A673 (cell line): ENCODE measurements at regions of chrX and their contacts with region 1.

Region 1: DNA sequence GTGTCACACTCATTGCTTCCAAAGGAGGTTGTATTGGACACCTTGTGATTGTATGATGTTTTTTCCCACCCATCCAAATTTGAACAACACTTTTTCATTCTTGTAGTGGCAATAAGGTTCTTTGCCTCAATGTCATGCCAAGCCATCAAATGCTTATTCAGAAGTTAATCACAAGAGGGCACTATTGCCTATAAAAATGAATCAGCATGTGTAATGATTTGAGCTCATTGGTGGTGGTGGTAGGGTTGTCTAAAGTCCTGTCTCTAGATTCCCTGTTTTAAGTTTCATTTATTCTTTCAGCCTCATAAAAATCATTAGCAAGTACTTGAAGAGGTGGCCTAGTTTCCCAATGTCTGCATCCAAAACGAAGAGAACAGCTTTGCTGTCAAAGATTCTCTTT is 37.0 kb downstream of the IRS4 start:
- DNase-seq: peak; percentile 56
- H3K4me3 ChIP-seq: no peak overlapping the region
- H3K27ac ChIP-seq: no peak overlapping the region
- H3K4me1 ChIP-seq: no peaks in the 10 kb centered on the region
- H3K27me3 ChIP-seq: peaks cover 3% of the 10 kb centered on the region
- CTCF ChIP-seq: peak; percentile 56

Region 2: GRCh38 chrX:108834036-108834435 is 134.7 kb after region 1 on chrX:
- CTCF ChIA-PET with region 1: no interaction called
- POLR2A ChIA-PET with region 1: no interaction called
- intact Hi-C with region 1: no loop called
- DNase-seq: no peak
- H3K4me3 ChIP-seq: no peak overlapping the region
- H3K27ac ChIP-seq: no peak overlapping the region
- H3K4me1 ChIP-seq: no peaks in the 10 kb centered on the region
- H3K27me3 ChIP-seq: no peaks in the 10 kb centered on the region
- CTCF ChIP-seq: no peak

Region 3: DNA sequence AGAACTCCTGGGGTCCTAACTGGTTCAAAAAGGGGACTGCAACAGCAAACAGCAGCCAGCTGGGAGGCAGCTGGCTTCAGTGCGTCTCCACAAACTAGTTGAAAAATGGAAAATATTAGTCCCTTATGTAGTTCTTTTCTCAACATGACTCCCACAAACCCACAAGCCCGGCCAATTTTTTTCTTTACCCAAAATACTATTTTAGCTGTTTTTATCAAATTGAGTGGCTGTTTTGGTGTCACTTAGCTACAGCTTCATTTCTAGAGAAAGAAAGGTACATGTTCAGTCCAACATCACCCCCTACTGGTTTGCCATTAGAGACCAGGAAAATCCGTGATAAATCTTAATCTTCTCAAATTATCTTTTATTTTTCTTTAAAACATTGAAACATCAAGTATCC is 685.3 kb after region 1 on chrX:
- CTCF ChIA-PET with region 1: interaction called, 7 read pairs
- POLR2A ChIA-PET with region 1: no interaction called
- intact Hi-C with region 1: loop called (anchors 2 kb)
- DNase-seq: peak; percentile 40
- H3K4me3 ChIP-seq: no peak overlapping the region
- H3K27ac ChIP-seq: no peak overlapping the region
- H3K4me1 ChIP-seq: no peaks in the 10 kb centered on the region
- H3K27me3 ChIP-seq: no peaks in the 10 kb centered on the region
- CTCF ChIP-seq: peak; percentile 59

Region 4: DNA sequence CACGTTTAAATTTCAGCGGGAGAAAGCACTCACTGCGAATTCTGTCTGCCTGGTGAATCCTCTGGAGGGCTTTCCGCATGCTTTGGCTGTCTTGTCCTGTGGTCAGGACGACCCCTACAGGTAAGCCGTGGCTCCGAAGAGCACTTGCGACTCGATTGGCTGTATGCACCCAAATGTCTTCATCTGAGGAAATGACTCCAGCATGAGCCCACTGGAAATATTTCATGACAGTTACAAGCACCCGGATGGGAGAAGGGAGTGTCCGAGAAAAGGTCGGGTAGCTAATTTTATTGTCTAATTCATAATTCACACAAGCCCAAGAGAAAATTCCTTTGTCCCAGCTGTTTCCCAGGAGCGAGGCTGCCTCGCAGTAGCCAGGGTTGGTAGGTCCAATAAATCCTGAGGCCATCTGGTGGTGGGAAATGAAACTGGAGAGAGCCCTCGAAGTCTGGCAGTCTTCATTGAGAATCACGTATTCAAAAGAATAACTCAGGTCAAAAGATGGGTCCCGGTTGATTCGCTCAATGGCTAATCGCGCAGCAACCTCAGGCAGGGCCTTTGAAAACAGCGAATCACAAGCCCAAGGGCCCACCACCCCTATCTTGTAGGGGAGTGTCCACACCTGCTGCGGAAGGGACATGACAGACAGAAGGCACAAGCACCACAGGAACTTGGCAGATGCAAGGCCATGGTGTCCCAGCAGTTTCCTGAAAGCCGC is 776.0 kb after region 1 on chrX:
- CTCF ChIA-PET with region 1: interaction called, 5 read pairs
- POLR2A ChIA-PET with region 1: no interaction called
- intact Hi-C with region 1: loop called (anchors 2 kb)
- DNase-seq: peak; percentile 78
- H3K4me3 ChIP-seq: no peak overlapping the region
- H3K27ac ChIP-seq: no peak overlapping the region
- H3K4me1 ChIP-seq: peaks cover 9% of the 10 kb centered on the region
- H3K27me3 ChIP-seq: peaks cover 9% of the 10 kb centered on the region
- CTCF ChIP-seq: peak; percentile 72

Region 5: GRCh38 chrX:109635176-109635575 is 935.8 kb after region 1 on chrX:
- CTCF ChIA-PET with region 1: no interaction called
- POLR2A ChIA-PET with region 1: no interaction called
- intact Hi-C with region 1: loop called (anchors 10 kb)
- DNase-seq: peak; percentile 48
- H3K4me3 ChIP-seq: no peak overlapping the region
- H3K27ac ChIP-seq: no peak overlapping the region
- H3K4me1 ChIP-seq: no peaks in the 10 kb centered on the region
- H3K27me3 ChIP-seq: no peaks in the 10 kb centered on the region
- CTCF ChIP-seq: peak; percentile 77